OCI-LY7 (cell line): ENCODE measurements at regions of chr10 and their contacts with region 1.

Region 1: DNA sequence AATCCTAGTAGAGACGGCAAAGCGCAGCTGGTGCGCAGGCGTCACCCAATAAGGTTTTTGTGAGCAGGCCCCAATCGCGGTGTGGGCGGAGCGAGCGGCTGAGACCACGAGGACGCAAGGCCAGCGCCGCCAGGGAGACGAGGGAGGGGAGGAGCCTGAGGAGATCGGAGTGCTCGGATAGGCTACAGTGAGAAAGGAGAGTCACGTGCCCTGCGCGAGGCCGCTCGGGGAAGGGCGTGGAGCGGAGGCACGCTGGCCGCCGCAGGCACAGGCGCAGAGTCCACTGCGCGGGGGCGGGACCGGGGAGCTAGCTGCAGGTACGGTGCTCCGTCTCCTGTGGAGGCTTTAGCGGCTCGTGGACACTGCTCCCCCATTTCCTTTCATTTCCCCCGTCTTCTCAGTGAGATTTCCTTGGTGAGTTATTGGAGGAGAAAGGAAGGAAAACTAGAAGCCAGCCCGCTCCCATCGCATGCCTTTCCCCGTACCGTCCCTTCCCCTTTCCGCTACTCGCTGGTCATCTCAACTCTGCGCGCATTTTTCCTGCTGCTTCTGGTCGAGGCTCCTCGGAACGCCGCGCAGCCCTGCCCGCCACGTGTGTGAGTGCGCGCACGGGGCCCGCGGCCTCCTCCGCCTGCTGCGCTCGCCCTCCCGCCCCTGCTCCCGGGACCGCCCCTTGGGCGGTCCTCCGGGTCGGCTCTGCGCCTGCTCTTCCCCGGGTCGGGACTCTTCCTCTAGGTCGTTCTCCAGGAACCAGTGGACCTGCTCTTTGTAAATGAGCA is at the start of gene THNSL1:
- DNase-seq: peak; percentile 97
- H3K4me3 ChIP-seq: peak within 1 kb of the TSS; percentile 78
- H3K27ac ChIP-seq: peak within 1 kb of the TSS; percentile 74
- H3K4me1 ChIP-seq: peaks cover 19% of the 10 kb centered on the region
- CTCF ChIP-seq: no peak
- total RNA-seq, gene THNSL1: 3.6 and 5.5 TPM in 2 replicates

Region 2: DNA sequence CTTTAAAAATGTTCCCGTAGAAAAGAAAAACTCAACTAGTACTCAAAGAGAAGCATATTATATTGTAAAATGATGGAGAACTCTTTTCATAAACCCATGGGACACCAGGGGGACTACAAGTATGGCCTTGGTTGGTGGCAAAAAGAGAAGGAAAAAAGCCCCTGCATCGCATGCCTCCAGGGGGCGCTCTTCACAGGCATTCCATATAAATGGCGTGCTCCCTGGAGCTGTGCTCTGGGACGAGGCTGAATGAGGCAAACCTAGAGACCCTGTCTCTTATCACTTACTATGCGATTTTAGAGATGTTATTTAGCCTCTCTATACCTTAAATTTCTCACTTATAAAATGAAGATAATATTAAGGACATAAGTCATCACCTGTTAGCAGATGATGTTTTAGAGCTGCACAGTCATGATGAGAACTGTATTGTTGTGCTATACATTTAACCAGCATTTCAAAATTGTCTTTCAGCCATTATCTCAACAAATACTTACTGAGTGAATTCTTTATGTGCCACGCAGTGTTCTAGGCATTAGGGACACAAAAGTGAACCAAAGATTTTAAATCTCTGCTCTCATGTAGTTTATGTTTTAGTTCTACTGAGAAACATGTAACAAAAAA is 398.7 kb before region 1 on chr10:
- CTCF ChIA-PET with region 1: no interaction called
- POLR2A ChIA-PET with region 1: no interaction called
- intact Hi-C with region 1: loop called (anchors 5 kb)
- DNase-seq: peak; percentile 47
- H3K4me3 ChIP-seq: no peak overlapping the region
- H3K27ac ChIP-seq: no peak overlapping the region
- H3K4me1 ChIP-seq: peaks cover 4% of the 10 kb centered on the region
- CTCF ChIP-seq: peak; percentile 94

Region 3: DNA sequence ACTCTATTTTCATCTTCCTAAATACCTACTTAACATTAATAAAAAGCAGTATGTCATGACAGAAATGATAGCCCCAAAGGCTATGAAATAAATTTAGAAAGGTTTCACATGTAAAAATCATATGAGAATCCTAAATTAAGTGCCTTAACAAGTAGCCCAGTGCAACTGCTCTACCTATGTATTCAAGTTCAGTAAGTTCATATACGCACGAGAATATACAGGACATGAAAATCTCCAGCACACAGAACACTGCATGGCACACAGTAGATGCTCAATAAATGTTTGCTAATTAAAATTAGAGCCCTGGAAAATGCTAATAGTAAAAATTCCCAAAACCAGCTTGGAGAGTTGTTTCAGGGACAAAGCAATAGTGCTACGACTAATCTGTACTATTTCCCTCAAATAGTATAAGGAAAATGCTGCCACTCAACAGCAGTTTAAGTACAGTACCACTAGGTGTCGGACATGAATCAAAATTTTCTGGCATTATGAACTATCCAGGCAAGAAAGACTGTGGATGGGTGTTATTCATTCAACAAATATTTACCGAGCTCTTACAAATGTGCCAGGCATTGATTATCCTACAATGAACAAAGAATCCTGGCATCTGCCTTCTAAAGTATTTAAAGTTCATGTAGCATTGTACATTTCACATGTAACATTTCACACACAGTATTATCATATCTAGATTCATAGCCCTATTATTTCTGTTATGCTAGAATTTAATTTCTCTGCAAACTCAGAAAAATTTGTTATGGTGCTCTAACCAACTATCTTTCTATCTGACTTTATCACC is 373.7 kb before region 1 on chr10:
- CTCF ChIA-PET with region 1: no interaction called
- POLR2A ChIA-PET with region 1: no interaction called
- intact Hi-C with region 1: loop called (anchors 10 kb)
- DNase-seq: peak; percentile 56
- H3K4me3 ChIP-seq: no peak overlapping the region
- H3K27ac ChIP-seq: no peak overlapping the region
- H3K4me1 ChIP-seq: no peaks in the 10 kb centered on the region
- CTCF ChIP-seq: peak; percentile 88

Region 4: GRCh38 chr10:24784061-24784460 is 232.5 kb before region 1 on chr10:
- CTCF ChIA-PET with region 1: no interaction called
- POLR2A ChIA-PET with region 1: no interaction called
- intact Hi-C with region 1: no loop called
- DNase-seq: no peak
- H3K4me3 ChIP-seq: no peak overlapping the region
- H3K27ac ChIP-seq: no peak overlapping the region
- H3K4me1 ChIP-seq: no peaks in the 10 kb centered on the region
- CTCF ChIP-seq: no peak

Region 5: GRCh38 chr10:24929056-24929544 is 87.5 kb before region 1 on chr10:
- CTCF ChIA-PET with region 1: no interaction called
- POLR2A ChIA-PET with region 1: no interaction called
- intact Hi-C with region 1: no loop called
- DNase-seq: no peak
- H3K4me3 ChIP-seq: no peak overlapping the region
- H3K27ac ChIP-seq: no peak overlapping the region
- H3K4me1 ChIP-seq: no peaks in the 10 kb centered on the region
- CTCF ChIP-seq: no peak

Region 6: DNA sequence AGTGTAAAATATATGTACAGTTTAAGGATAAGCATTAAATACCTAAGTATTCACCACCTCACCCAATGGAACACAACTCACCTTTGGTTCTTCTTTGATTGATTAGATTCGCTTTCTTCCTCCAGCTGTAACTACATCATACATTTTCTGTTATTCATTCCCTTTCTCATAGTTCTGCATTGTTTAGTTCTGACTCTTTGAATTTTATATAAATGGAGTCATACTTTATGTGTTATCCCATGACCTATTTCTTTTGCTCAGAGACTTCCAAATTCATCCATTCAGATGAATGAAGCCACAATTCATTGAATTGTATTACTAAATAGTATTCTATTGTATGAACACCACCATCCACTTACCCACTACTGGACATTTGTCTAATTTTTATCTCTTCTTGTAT is 12.1 kb after region 1 on chr10:
- CTCF ChIA-PET with region 1: no interaction called
- POLR2A ChIA-PET with region 1: no interaction called
- intact Hi-C with region 1: no loop called
- DNase-seq: no peak
- H3K4me3 ChIP-seq: no peak overlapping the region
- H3K27ac ChIP-seq: no peak overlapping the region
- H3K4me1 ChIP-seq: no peaks in the 10 kb centered on the region
- CTCF ChIP-seq: no peak